ENCODE measurements at regions of chr5 and their contacts with region 1.

Region 1: DNA sequence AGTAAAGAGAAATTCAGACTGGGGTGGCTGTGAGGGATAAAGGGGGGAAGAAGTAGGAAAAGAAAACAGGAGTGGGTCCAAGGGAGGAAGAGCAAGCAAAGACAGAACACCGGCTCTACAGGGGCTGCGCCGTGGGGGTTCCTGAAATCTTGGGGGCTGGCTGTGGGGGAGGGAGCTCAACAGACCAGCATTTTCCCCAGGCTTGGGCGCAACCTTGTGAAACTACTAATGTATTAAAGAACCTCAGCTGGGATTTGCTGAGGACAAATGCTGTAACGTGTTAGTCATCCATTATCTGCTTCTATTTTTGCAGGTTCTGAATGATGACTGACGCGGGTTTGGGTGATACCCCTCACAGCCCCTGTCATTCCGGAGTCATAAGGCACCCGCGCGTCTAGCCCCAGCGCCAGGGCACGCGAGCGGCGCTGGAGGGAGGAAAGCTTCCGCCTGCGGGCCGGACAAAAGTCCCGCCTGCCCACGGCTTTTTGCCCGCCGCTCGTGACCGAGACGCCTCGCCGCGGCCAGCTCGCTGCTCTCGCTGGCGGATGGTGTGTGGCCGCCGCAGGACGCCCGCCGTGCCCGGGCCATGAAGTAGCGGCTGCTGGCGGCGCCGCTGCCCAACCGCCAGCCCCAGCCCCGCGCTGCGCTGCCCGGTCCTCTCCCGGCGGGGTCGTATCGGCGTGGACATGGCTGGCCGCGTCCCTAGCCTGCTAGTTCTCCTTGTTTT is 110.6 kb downstream of the PAM start:
- DNase-seq: peak; percentile 81
- H3K4me3 ChIP-seq: peak overlapping the region; percentile 54 to 87 (median 77)
- H3K27ac ChIP-seq: peak overlapping the region; percentile 85 to 91 (median 88)
- H3K4me1 ChIP-seq: peaks cover 0 to 51% (median 28%) of the 10 kb centered on the region in 4 donors
- H3K27me3 ChIP-seq: no peaks in the 10 kb centered on the region
- CTCF ChIP-seq: no peak
- EP300 ChIP-seq: no peak
- POLR2A ChIP-seq: no peak

Region 2: GRCh38 chr5:102628441-102629175 is 237.1 kb before region 1 on chr5:
- intact Hi-C with region 1: loop called (anchors 10 kb)
- DNase-seq: no peak
- H3K4me3 ChIP-seq: no peak overlapping the region
- H3K27ac ChIP-seq: peak overlapping the region in 1 of 4 donors; percentile 32
- H3K4me1 ChIP-seq: peaks cover 0 to 40% (median 37%) of the 10 kb centered on the region in 4 donors
- H3K27me3 ChIP-seq: no peaks in the 10 kb centered on the region
- CTCF ChIP-seq: no peak
- EP300 ChIP-seq: no peak
- POLR2A ChIP-seq: no peak

Region 3: GRCh38 chr5:102700120-102700831 is 165.4 kb before region 1 on chr5:
- intact Hi-C with region 1: no loop called
- DNase-seq: no peak
- H3K4me3 ChIP-seq: no peak overlapping the region
- H3K27ac ChIP-seq: no peak overlapping the region
- H3K4me1 ChIP-seq: peaks cover 0 to 7% (median 0%) of the 10 kb centered on the region in 4 donors
- H3K27me3 ChIP-seq: no peaks in the 10 kb centered on the region
- CTCF ChIP-seq: no peak
- EP300 ChIP-seq: no peak
- POLR2A ChIP-seq: no peak

Region 4: GRCh38 chr5:102782311-102782770 is 83.3 kb before region 1 on chr5:
- intact Hi-C with region 1: loop called (anchors 5 kb)
- DNase-seq: no peak
- H3K4me3 ChIP-seq: no peak overlapping the region
- H3K27ac ChIP-seq: no peak overlapping the region
- H3K4me1 ChIP-seq: peaks cover 0 to 47% (median 35%) of the 10 kb centered on the region in 4 donors
- H3K27me3 ChIP-seq: no peaks in the 10 kb centered on the region
- CTCF ChIP-seq: no peak
- EP300 ChIP-seq: no peak
- POLR2A ChIP-seq: no peak

Measured in sigmoid colon (tissue), 7 donors.